ENCODE measurements at regions of chr12 and their contacts with region 1.

Region 1: GRCh38 chr12:14257734-14258574 is 107.5 kb upstream of the ATF7IP start:
- DNase-seq: no peak
- H3K4me3 ChIP-seq: peak overlapping the region; percentile 45
- H3K27ac ChIP-seq: peak overlapping the region; percentile 91
- H3K4me1 ChIP-seq: peaks cover 53% of the 10 kb centered on the region
- H3K27me3 ChIP-seq: no peaks in the 10 kb centered on the region
- CTCF ChIP-seq: no peak

Region 2: DNA sequence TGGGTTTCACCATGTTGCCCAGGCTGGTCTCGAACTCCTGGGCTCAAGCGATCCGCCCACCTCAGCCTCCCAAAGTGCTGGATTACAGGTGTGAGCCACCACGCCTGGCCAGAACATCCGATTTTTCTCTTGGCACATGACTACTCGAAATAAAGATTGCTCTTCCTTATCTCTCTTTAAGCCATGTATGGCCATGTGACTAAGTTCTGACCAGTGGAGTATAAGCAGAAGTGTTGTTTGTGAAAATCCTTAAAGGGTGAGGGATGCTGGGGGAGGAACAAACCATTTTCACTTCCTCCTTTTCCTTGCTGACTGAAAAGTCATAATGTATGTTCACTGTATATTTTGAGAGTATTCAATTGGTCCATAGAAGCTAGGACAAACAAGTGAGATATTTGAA is 56.8 kb after region 1 on chr12:
- intact Hi-C with region 1: no loop called
- DNase-seq: no peak
- H3K4me3 ChIP-seq: no peak overlapping the region
- H3K27ac ChIP-seq: no peak overlapping the region
- H3K4me1 ChIP-seq: no peaks in the 10 kb centered on the region
- H3K27me3 ChIP-seq: no peaks in the 10 kb centered on the region
- CTCF ChIP-seq: no peak

Region 3: GRCh38 chr12:14365294-14366208 is 107.6 kb after region 1 on chr12 and contains the start of gene ATF7IP:
- intact Hi-C with region 1: loop called (anchors 2 kb)
- DNase-seq: peak; percentile 95
- H3K4me3 ChIP-seq: peak within 1 kb of the TSS; percentile 85
- H3K27ac ChIP-seq: peak within 1 kb of the TSS; percentile 99
- H3K4me1 ChIP-seq: peaks cover 27% of the 10 kb centered on the region
- H3K27me3 ChIP-seq: no peaks in the 10 kb centered on the region
- CTCF ChIP-seq: peak; percentile 45
- total RNA-seq, gene ATF7IP: 64.3 TPM

Region 4: GRCh38 chr12:14514154-14514842 is 256.3 kb after region 1 on chr12:
- intact Hi-C with region 1: no loop called
- DNase-seq: no peak
- H3K4me3 ChIP-seq: no peak overlapping the region
- H3K27ac ChIP-seq: no peak overlapping the region
- H3K4me1 ChIP-seq: no peaks in the 10 kb centered on the region
- H3K27me3 ChIP-seq: no peaks in the 10 kb centered on the region
- CTCF ChIP-seq: peak; percentile 65

Measured in left ventricle myocardium inferior (tissue), 1 donor.